HEK293 (cell line): ENCODE measurements at regions of chrX and their contacts with region 1.

Region 1: DNA sequence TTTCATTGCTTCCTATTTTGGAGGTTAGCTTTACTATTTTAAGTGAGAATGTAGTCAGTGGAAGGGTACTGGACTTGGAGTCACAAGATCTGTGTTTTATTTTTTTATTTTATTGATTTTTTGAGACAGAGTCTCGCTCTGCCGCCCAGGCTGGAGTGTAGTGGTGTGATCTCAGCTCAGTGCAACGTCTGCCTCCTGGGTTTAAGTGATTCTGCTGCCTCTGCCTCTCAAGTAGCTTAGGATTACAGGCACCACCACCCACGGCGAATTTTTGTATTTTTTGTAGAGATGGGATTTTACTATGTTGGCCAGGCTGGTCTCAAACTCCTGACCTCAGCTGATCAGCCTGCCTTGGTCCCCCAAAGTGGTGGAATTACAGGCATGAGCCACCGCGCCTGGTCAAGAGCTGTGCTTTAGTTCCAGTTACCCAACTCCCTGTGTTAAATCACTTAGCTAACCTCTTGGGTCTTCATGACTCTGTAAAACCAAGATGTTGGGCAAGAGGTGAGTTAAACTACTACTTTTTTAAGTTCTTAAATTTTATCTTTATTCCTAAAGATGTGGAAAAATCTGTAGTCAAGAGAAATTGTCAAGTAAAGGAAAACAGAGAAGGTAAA is 11.2 kb downstream of the USP9X start:
- H3K4me3 ChIP-seq: no peak overlapping the region
- H3K27ac ChIP-seq: no peak overlapping the region
- H3K4me1 ChIP-seq: peaks cover 49% of the 10 kb centered on the region
- CTCF ChIP-seq: no peak

Region 2: DNA sequence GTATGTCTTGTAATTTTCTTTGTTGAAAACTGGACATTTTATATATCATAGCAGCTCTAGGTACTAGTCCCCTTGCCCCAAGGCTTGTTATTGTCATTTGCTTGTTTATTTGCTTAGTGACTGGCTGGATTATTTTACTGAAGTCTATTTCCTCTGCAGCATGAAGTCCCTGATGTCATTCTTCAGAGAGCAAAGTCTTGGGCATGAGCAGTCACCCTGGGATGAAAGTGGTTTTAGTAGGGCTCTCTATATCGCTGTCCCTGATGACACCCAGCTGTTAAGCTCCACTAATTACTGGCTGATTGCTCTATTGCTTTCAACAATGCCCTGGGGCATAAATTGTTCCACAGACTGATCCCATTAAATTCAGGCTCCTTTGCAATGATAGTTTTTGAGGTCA is 124.7 kb before region 1 on chrX:
- CTCF ChIA-PET with region 1: no interaction called
- POLR2A ChIA-PET with region 1: no interaction called
- H3K4me3 ChIP-seq: no peak overlapping the region
- H3K27ac ChIP-seq: no peak overlapping the region
- H3K4me1 ChIP-seq: 0 out of 2 replicates have a peak, but pooled peaks cover 4% of the 10 kb centered on the region
- CTCF ChIP-seq: no peak

Region 3: DNA sequence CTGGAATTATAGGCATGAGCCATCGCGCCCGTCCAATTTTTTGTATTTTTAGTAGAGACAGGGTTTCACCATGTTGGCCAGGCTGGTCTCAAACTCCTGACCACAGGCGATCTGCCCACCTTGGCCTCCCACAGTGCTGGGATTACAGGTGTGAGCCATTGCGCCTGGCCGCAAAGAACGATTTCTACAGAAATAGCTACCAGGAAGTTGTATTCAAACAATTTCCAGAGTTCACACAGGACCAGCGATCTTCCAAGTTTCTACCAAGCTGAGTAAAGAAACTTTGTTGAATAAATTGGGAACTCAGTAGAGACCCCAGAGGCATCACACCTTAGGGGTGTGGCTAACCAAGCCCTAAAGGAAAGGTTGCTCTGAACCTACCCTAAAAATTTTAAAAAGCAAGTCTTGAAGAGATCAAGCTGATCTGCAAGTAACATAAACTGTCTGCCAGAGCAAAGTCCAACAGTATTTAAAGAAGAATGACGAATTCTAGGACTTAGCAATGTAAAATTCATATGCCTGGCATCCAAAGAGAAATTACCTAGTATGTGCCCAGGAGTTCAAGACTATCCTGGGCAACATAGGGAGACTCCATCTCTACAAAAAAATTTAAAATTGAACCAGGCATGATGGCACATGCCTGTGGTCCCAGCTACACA is 59.6 kb before region 1 on chrX:
- CTCF ChIA-PET with region 1: no interaction called
- POLR2A ChIA-PET with region 1: no interaction called
- H3K4me3 ChIP-seq: no peak overlapping the region
- H3K27ac ChIP-seq: no peak overlapping the region
- H3K4me1 ChIP-seq: no peaks in the 10 kb centered on the region
- CTCF ChIP-seq: no peak

Region 4: GRCh38 chrX:41110801-41111625 is 14.6 kb after region 1 on chrX:
- CTCF ChIA-PET with region 1: interaction called, 34 read pairs
- POLR2A ChIA-PET with region 1: interaction called, 4 read pairs
- H3K4me3 ChIP-seq: no peak overlapping the region
- H3K27ac ChIP-seq: peak overlapping the region; percentile 4; the same call in 1 of the 2 replicates
- H3K4me1 ChIP-seq: peaks cover 56% of the 10 kb centered on the region
- CTCF ChIP-seq: no peak

Region 5: DNA sequence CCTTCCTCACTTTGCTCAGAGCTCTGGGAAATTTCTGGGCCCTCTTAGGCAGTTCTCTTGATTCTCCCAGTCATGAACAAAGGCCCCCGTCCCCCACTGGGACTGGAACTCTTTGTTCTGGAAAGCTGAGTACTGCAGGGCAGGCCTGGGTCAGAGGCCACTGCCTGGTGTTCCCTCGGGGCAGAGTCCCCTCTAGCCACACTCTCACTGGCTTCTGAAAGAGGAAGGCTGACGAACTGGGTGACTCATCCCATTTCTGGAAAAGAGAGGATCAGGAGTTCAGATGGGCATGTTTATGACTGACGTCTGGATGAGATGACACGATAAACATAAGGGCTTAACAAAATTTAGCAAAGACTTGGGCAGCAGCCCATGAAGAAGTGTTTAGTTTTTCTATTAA is 285.2 kb after region 1 on chrX:
- CTCF ChIA-PET with region 1: no interaction called
- POLR2A ChIA-PET with region 1: no interaction called
- H3K4me3 ChIP-seq: no peak overlapping the region
- H3K27ac ChIP-seq: 0 out of 2 replicates have a peak overlapping the region, but pooled peaks have one; percentile 46
- H3K4me1 ChIP-seq: peaks cover 14% of the 10 kb centered on the region
- CTCF ChIP-seq: no peak